HEK293 (cell line): ENCODE measurements at regions of chr6 and their contacts with region 1.

Region 1: GRCh38 chr6:149545754-149546528 is at the start of gene PPIL4:
- H3K4me3 ChIP-seq: peak within 1 kb of the TSS; percentile 79
- H3K27ac ChIP-seq: peak within 1 kb of the TSS; percentile 79
- H3K4me1 ChIP-seq: peaks cover 3% of the 10 kb centered on the region; the same call in 1 of the 2 replicates
- CTCF ChIP-seq: peak; percentile 82

Region 2: DNA sequence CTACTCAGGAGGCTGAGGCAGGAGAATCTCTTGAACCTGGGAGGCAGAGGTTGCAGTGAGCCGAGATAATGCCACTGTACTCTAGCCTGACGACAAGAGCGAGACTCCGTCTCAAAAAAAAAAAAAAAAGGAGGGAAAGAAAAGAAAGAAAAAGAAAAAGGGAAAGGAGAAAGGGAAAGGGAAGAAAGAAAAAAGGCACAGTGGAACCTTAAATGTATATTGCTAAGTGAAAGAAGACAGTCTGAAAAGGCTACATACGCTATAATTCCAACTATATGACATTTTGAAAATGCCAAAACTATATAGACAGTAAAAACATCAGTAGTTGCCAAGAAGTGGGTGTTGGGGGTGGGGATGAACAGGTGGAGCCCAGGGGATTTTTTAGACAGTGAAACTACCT is 16.3 kb before region 1 on chr6:
- CTCF ChIA-PET with region 1: interaction called, 10 read pairs
- POLR2A ChIA-PET with region 1: no interaction called
- H3K4me3 ChIP-seq: no peak overlapping the region
- H3K27ac ChIP-seq: no peak overlapping the region
- H3K4me1 ChIP-seq: no peaks in the 10 kb centered on the region
- CTCF ChIP-seq: no peak

Region 3: DNA sequence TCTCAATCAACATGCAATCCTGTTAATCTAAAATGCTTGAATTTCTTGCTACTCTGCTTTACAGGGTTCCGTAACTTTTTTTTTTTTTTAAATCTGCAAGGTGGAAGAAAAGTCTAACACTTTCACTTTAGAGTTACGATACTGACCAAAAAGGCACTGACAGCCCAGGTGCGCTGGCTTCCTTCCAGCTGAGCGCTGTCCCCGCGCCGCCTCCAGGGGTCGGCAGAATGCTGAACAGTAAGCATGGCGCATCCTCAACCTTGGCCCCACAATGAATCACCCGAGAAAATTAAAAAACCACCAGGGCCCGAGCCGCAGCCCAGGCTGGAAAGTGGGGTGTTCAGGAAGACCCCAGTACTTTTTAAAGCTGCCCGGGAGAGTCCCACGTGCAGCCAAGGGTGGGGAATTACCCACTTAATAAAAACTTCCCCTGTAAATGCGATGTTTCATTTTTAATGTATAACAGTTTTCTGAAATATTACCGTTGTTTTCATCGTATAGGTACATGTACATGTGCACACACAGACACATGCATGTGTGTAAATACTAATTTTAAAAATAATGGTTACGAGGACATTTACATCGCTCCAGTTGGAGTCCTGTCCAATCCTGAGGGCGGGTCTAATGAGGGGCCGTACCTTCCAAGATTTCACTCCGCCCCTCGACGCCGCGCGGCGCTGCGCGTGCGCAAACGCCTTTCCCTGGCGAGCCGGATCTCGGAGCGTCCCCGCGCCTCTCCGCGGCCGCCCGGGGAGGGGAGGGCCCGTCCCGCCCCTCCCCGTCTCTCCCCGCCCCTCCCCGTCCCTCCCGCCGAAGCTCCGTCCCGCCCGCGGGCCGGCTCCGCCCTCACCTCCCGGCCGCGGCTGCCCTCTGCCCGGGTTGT is 19.8 kb after region 1 on chr6 and contains the start of gene GINM1:
- CTCF ChIA-PET with region 1: interaction called, 14 read pairs
- POLR2A ChIA-PET with region 1: interaction called, 11 read pairs
- H3K4me3 ChIP-seq: peak within 1 kb of the TSS; percentile 83
- H3K27ac ChIP-seq: peak within 1 kb of the TSS; percentile 90
- H3K4me1 ChIP-seq: peaks cover 22% of the 10 kb centered on the region; the same call in 1 of the 2 replicates
- CTCF ChIP-seq: peak; percentile 75

Region 4: DNA sequence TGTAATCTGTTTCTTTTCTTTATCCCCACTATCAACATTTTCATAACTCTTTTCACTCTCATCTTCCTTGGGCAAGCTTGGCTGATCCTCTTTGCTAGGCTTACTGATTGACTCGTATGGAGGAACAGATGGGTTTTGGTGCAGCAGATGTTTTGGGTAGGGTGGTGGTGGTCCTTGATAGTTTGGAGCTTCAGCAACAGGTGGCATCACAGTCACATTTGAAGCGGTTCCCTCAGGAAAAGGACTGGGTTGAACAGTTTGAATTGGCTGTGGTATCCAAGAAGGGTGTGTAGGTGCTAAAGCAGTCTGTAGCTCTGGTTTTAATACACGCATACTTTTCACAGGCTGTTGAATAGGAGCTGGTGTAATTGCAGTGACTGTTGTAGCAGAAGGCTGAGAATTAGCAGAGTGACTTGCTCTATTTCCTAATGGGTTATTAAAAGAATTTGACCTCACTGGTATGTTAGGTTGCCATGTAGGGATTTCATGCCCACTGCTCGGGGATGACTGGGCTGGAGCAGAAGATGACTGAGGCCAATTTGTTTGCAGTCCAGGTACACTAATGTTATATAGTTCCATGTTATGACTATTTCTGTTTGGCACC is 137.4 kb after region 1 on chr6:
- CTCF ChIA-PET with region 1: no interaction called
- POLR2A ChIA-PET with region 1: no interaction called
- H3K4me3 ChIP-seq: no peak overlapping the region
- H3K27ac ChIP-seq: no peak overlapping the region
- H3K4me1 ChIP-seq: no peaks in the 10 kb centered on the region
- CTCF ChIP-seq: no peak